GM10248 (cell line): ENCODE measurements at regions of chr6 and their contacts with region 1.

Region 1: DNA sequence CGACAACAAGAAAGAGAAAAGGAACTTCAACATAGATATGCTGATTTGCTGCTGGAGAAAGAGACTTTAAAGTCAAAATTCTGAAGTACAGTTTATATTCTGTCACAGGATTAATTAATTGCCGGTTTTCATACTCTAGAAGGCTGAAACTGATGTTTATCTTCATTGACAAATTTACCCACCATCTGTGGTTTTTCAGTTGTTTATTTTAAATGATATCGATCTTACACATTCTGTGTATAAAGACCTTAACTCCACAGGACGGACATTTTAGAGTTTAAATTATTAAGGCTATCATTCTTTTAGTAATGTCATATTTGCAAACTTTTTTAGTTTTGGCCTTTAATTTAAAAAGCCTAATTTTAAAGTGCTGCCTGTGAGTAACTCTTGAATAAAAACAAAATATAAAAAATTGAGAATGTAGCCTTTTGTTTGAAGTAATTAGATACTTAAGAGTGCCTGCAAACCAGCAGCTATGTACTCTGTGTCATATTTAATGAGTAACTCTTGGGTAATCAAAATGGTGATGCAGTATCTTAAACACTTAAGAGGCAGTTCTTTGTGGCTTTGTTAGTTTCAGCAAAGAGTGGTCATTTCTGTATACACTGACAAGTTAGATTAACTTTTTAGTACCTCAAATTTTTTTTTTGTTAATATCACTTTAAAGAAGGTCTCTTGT is 59.3 kb downstream of the CDC5L start:
- DNase-seq: no peak
- CTCF ChIP-seq: no peak

Region 2: GRCh38 chr6:44431118-44431725 is 15.5 kb before region 1 on chr6:
- CTCF ChIA-PET with region 1: interaction called, 190 read pairs
- POLR2A ChIA-PET with region 1: no interaction called
- DNase-seq: peak; percentile 42
- CTCF ChIP-seq: peak; percentile 72

Region 3: GRCh38 chr6:44470746-44471145 is 24.0 kb after region 1 on chr6:
- CTCF ChIA-PET with region 1: interaction called, 22 read pairs
- POLR2A ChIA-PET with region 1: no interaction called
- DNase-seq: no peak
- CTCF ChIP-seq: no peak